A549 (cell line): ENCODE measurements at regions of chr1 and their contacts with region 1.

Region 1: GRCh38 chr1:201895913-201896807 is 7.5 kb downstream of the SHISA4 start:
- DNase-seq: peak; percentile 88 to 94
- ATAC-seq: peak; percentile 91 to 96
- H3K4me3 ChIP-seq: no peak overlapping the region
- H3K27ac ChIP-seq: peak overlapping the region; percentile 60 to 73; a peak in 5 of 6 replicates
- H3K4me1 ChIP-seq: peaks cover 3% of the 10 kb centered on the region; the same call in 1 of the 3 replicates
- CTCF ChIP-seq: peak; percentile 98
- EP300 ChIP-seq: no peak
- POLR2A ChIP-seq: no peak
- RAD21 ChIP-seq: peak; percentile 99

Region 2: GRCh38 chr1:201282931-201283829 is 613.0 kb before region 1 on chr1 and contains the start of gene PKP1:
- CTCF ChIA-PET with region 1: no interaction called
- POLR2A ChIA-PET with region 1: no interaction called
- DNase-seq: no peak
- ATAC-seq: no peak; a peak in 1 of 6 replicates
- H3K4me3 ChIP-seq: no peak within 1 kb of the TSS
- H3K27ac ChIP-seq: no peak within 1 kb of the TSS; a peak in 1 of 6 replicates
- H3K4me1 ChIP-seq: peaks cover 5% of the 10 kb centered on the region; the same call in 2 of the 3 replicates
- CTCF ChIP-seq: no peak
- EP300 ChIP-seq: no peak
- POLR2A ChIP-seq: no peak
- RAD21 ChIP-seq: no peak
- polyA plus RNA-seq, gene PKP1: not detected in 2 replicates

Region 3: GRCh38 chr1:201877877-201878401 is 18.2 kb before region 1 on chr1:
- CTCF ChIA-PET with region 1: interaction called, 245 read pairs
- POLR2A ChIA-PET with region 1: interaction called, 3 read pairs
- DNase-seq: peak; percentile 57 to 58
- ATAC-seq: peak; percentile 68 to 70; a peak in 4 of 6 replicates
- H3K4me3 ChIP-seq: no peak overlapping the region
- H3K27ac ChIP-seq: no peak overlapping the region
- H3K4me1 ChIP-seq: peaks cover 8% of the 10 kb centered on the region
- CTCF ChIP-seq: peak; percentile 63
- EP300 ChIP-seq: no peak
- POLR2A ChIP-seq: no peak
- RAD21 ChIP-seq: peak; percentile 53

Region 4: GRCh38 chr1:201937624-201938213 is 41.6 kb after region 1 on chr1:
- CTCF ChIA-PET with region 1: interaction called, 19 read pairs
- POLR2A ChIA-PET with region 1: no interaction called
- DNase-seq: no peak
- ATAC-seq: no peak; a peak in 1 of 6 replicates
- H3K4me3 ChIP-seq: no peak overlapping the region
- H3K27ac ChIP-seq: no peak overlapping the region
- H3K4me1 ChIP-seq: peaks cover 4% of the 10 kb centered on the region; the same call in 1 of the 3 replicates
- CTCF ChIP-seq: no peak
- EP300 ChIP-seq: no peak
- POLR2A ChIP-seq: no peak
- RAD21 ChIP-seq: no peak

Region 5: GRCh38 chr1:201970334-201971159 is 74.4 kb after region 1 on chr1:
- CTCF ChIA-PET with region 1: interaction called, 855 read pairs
- POLR2A ChIA-PET with region 1: interaction called, 12 read pairs
- DNase-seq: no peak
- ATAC-seq: no peak
- H3K4me3 ChIP-seq: no peak overlapping the region
- H3K27ac ChIP-seq: no peak overlapping the region
- H3K4me1 ChIP-seq: no peaks in the 10 kb centered on the region
- CTCF ChIP-seq: no peak
- EP300 ChIP-seq: no peak
- POLR2A ChIP-seq: no peak
- RAD21 ChIP-seq: no peak

Region 6: DNA sequence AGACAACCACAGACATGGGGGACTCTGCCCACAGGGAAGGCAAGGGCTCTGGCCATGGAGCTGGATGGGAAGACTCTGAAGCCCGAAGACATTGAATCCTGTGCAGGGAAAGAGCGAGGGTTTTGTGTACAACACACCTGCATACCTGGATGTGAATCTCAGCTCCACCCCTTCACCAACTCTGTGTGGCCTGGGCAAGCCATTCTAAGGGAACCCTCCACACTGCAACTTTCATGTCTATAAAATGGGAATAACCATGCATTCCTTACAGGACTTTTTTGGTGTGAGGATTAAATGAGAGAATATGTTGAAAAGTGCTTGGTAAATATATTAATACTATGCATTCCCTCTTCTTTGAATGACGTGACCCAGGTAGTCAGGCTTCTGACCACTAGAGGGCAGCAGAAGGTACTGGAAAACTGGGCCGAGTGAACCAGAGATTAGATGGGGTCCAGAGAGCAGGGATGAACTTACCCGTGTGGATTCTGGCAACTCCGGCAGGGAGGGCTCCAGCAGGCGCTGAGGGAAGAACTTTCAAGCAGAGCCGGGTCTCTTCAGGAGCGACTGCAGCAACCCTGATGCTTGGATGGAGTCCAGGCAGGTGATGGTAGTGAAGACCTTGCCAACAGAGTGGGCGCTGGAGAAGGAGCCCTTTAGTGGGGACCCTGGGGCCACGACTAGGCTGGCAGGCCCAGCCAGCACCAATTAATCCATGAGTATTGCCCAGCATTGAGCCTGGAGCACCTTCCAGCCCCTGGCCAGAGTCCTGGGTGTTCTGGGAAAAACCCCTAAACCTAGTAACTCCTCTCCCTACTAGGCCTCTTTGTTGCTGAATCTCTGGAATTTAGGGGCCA is 113.4 kb after region 1 on chr1:
- CTCF ChIA-PET with region 1: interaction called, 25 read pairs
- POLR2A ChIA-PET with region 1: interaction called, 4 read pairs
- DNase-seq: peak; percentile 91 to 92
- ATAC-seq: peak; percentile 58 to 67
- H3K4me3 ChIP-seq: peak overlapping the region; percentile 95
- H3K27ac ChIP-seq: peak overlapping the region; percentile 93 to 94
- H3K4me1 ChIP-seq: peaks cover 55% of the 10 kb centered on the region
- CTCF ChIP-seq: peak; percentile 95
- EP300 ChIP-seq: no peak
- POLR2A ChIP-seq: no peak
- RAD21 ChIP-seq: peak; percentile 96 to 97